ENCODE measurements at regions of chr4 and their contacts with region 1.

Region 1: GRCh38 chr4:105453550-105454205 is 20.2 kb downstream of the PPA2 start:
- DNase-seq: no peak
- H3K4me3 Mint-ChIP-seq: no peak overlapping the region
- H3K27ac Mint-ChIP-seq: peak overlapping the region; percentile 79
- H3K4me1 Mint-ChIP-seq: peaks cover 9% of the 10 kb centered on the region
- H3K27me3 Mint-ChIP-seq: no peaks in the 10 kb centered on the region

Region 2: GRCh38 chr4:105113800-105114199 is 339.9 kb before region 1 on chr4:
- intact Hi-C with region 1: no loop called
- DNase-seq: no peak
- H3K4me3 Mint-ChIP-seq: no peak overlapping the region
- H3K27ac Mint-ChIP-seq: no peak overlapping the region
- H3K4me1 Mint-ChIP-seq: no peaks in the 10 kb centered on the region
- H3K27me3 Mint-ChIP-seq: peaks cover 8% of the 10 kb centered on the region

Region 3: GRCh38 chr4:105140684-105141490 is 312.8 kb before region 1 on chr4:
- intact Hi-C with region 1: loop called (anchors 1 kb)
- DNase-seq: peak; percentile 83
- H3K4me3 Mint-ChIP-seq: no peak overlapping the region
- H3K27ac Mint-ChIP-seq: no peak overlapping the region
- H3K4me1 Mint-ChIP-seq: peaks cover 12% of the 10 kb centered on the region
- H3K27me3 Mint-ChIP-seq: no peaks in the 10 kb centered on the region

Region 4: DNA sequence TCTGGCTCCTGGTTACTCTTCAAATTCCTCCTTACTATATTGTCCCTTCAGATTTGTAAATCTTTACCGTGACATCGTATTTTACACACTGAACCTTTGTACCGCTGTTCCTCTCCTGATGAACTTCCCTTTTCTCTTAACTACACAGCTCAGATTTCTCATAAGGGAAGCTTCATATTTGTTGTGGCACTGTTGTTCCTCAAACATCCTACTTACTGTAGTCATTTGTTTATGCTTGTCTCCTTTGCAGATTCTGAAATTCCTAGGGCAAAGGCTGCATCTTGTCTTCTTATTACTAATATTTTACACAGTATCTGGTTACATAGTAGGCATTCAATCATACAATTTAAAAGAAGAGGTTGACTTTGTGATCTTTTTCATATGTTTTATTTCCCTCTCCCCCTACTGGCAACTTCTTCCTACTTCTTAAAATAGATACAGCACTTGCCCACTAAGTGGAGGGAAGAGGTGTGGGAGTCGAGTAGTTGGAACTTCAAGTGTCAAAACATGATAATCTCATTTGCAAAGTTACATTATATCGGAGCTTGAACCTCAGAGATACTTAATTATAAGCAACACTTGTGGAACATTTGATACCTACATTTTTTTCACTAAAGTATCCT is 257.0 kb before region 1 on chr4:
- intact Hi-C with region 1: no loop called
- DNase-seq: no peak
- H3K4me3 Mint-ChIP-seq: no peak overlapping the region
- H3K27ac Mint-ChIP-seq: no peak overlapping the region
- H3K4me1 Mint-ChIP-seq: peaks cover 29% of the 10 kb centered on the region
- H3K27me3 Mint-ChIP-seq: no peaks in the 10 kb centered on the region

Region 5: GRCh38 chr4:105715692-105716278 is 262.1 kb after region 1 on chr4:
- intact Hi-C with region 1: no loop called
- DNase-seq: no peak
- H3K4me3 Mint-ChIP-seq: no peak overlapping the region
- H3K27ac Mint-ChIP-seq: no peak overlapping the region
- H3K4me1 Mint-ChIP-seq: peaks cover 4% of the 10 kb centered on the region
- H3K27me3 Mint-ChIP-seq: peaks cover 1% of the 10 kb centered on the region

Measured in activated CD4-positive, alpha-beta T cell treated with anti-CD3 and anti-CD28 coated beads, Interleukin-2, amount 10 ng/mL, durations not matched to agents 24 days and 14 days (primary cell).